Prostate gland (tissue), 2 donors: ENCODE measurements at regions of chr14 and their contacts with region 1.

Region 1: DNA sequence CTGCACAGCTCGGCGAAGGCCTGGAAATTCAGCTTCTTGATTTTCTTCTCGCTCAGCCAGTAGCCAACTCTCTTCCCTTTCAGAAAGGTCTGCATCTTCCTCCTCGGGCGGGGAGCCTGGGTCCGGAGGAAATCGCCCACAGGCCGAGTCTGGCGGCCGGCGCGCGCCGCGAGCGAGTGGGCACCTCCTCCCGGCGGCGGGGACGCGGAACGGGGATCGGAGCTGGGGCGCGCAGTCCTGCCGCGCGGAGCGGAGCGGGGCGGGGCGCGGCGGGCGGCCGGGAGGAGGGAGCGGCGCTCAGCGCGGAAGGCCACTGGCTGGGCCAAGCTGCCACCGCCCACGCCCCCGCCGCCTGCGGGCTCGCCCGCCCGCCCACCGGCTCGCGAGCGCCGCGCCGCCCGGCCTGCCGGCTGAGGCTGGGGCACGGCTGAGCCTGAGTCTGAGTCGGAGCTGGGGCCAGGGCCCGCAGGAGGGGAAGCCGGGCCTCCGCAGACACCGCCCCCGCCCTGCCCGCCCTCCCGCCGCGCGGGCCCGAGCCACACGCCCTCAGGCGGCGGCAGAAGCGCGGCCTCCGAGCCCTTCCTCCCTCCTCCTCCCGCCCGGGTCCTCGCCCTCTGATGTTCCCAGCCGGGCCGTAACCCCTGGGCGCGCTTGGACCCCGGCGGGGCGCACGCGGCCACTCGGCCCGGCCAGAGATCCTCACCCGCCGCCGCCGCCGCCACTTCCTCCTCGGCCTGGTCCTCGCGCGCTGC is 480 bp downstream of the ITPK1 start:
- DNase-seq: peak; percentile 81
- H3K4me3 ChIP-seq: peak overlapping the region; percentile 85 to 89
- H3K27ac ChIP-seq: peak overlapping the region; percentile 94
- H3K4me1 ChIP-seq: peaks cover 7% of the 10 kb centered on the region
- H3K27me3 ChIP-seq: no peaks in the 10 kb centered on the region
- CTCF ChIP-seq: peak in 1 of 4 experiments; percentile 3
- POLR2A ChIP-seq: peak; percentile 54

Region 2: DNA sequence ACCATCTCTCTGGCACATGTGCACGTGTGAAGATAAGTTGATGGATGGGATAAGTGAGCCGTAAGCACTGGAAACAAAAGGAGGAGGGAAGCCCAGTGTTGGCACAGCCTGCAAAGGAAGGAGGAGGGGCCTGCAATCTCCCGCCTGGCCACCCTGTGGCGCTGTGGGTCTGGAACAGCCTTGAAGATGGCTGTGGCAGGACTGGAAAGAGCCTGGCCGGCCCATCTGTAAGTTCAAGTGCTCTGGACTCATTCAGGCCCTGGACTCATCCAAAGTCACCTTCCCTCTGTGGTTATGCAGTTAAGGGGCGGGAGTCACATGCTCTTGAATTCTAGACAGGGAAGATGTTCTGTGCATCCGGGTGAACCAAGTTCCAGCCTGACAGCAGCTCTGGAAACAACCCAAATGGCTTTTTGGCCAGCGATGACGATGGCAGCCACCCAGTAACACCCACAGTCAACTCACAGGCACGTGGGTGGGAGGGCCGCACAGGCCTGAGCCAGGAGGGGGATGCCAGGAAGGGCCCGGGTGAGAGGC is 141.9 kb before region 1 on chr14:
- intact Hi-C with region 1: loop called (anchors 5 kb)
- DNase-seq: peak; percentile 86
- H3K4me3 ChIP-seq: no peak overlapping the region
- H3K27ac ChIP-seq: peak overlapping the region; percentile 59 to 70
- H3K4me1 ChIP-seq: peaks cover 17% of the 10 kb centered on the region
- H3K27me3 ChIP-seq: no peaks in the 10 kb centered on the region
- CTCF ChIP-seq: peak; percentile 60 to 95 (median 85)
- POLR2A ChIP-seq: no peak

Region 3: DNA sequence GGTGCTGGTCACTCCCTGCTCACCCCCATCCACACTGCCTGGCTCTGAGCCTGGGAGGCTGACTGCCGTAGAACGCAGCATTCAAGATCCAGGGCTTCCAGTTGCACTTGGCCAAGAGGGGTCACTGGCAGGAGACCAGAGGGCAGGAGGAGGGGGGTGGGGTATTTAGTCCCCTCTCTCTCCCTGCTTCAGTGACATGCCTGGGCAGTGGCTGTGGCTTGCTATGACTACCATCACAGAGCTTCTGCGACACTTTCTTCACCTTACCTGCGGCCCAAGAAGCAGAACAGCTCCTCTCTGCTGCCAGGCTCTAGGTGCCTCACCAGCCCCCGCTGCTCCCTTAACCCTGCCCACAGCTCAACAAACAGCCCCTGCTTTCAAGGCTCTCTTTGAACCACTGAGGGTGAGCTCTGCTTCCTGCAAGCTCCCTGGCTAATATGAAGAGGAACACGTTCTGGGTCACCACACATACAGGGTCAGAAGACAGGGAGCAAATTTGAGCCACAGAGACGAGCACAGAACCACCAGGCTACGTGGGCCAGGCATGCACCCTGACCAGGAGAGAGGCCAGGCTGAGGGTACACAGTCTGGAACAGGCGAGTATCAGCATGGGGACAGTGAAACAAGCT is 55.2 kb before region 1 on chr14:
- intact Hi-C with region 1: loop called (anchors 5 kb)
- DNase-seq: no peak
- H3K4me3 ChIP-seq: no peak overlapping the region
- H3K27ac ChIP-seq: no peak overlapping the region
- H3K4me1 ChIP-seq: peaks cover 14% of the 10 kb centered on the region
- H3K27me3 ChIP-seq: no peaks in the 10 kb centered on the region
- CTCF ChIP-seq: no peak
- POLR2A ChIP-seq: no peak

Region 4: GRCh38 chr14:93184388-93185353 is 69.4 kb after region 1 on chr14 and contains the starts of genes LYSET and MOAP1:
- intact Hi-C with region 1: loop called (anchors 5 kb)
- DNase-seq: peak; percentile 84
- H3K4me3 ChIP-seq: peak within 1 kb of the TSS; percentile 85 to 92
- H3K27ac ChIP-seq: peak within 1 kb of the TSS; percentile 93 to 95
- H3K4me1 ChIP-seq: peaks cover 5% of the 10 kb centered on the region
- H3K27me3 ChIP-seq: no peaks in the 10 kb centered on the region
- CTCF ChIP-seq: peak in 3 of 4 experiments; percentile 9 to 44 (median 28)
- POLR2A ChIP-seq: peak; percentile 94
- total RNA-seq, gene LYSET: 7.3 to 28.9 TPM
- total RNA-seq, gene MOAP1: 31.2 to 39.0 TPM